ENCODE measurements at regions of chr15 and their contacts with region 1.

Region 1: GRCh38 chr15:74635228-74635627 is 19.6 kb downstream of the CLK3 start:
- DNase-seq: peak; percentile 61
- H3K4me3 Mint-ChIP-seq: no peak overlapping the region
- H3K27ac Mint-ChIP-seq: no peak overlapping the region
- H3K4me1 Mint-ChIP-seq: no peaks in the 10 kb centered on the region
- H3K27me3 Mint-ChIP-seq: no peaks in the 10 kb centered on the region

Region 2: DNA sequence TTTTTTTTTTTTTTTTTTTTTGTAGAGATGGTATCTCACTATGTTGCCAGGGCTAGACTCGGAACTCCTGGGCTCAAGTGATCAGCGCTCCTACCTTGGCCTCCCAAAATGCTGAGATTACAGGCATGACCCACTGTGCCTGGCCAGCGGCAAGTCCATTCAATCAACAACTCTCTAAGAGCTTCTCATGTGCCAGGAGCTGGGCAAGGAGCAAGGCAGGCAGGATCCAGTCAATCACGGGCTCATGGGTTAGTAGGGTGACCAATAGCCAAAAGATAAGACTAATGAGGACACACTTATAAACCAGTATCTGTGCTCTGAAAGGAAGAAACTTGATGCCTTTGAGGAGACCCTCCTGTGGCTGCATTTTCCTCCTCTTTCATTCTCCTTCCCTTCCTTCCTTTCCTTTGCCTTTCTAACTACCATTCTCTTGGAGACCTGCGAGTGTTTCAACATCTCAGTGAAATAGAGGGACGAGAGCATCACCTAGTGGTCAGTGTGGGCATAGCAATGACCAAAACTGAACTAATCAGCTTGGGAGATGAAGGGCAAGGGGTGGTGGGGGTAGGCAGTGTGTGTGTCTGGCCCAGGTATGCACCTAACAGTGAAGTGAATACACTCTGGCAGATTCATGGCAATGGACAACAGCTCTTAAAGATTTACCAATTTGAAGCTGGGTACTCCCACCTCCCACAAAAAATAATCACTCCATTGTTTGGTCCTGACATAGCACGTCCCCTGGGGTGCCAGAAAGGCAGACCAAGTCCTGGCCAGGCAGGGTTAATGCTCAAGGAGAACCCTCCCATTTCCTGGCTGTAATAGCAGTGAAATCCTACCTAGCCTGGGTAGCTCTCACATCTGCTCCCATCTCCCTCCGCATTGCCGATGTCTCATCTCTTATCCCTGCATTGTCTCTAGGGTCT is 315.1 kb after region 1 on chr15:
- intact Hi-C with region 1: loop called (anchors 5 kb)
- DNase-seq: peak; percentile 71
- H3K4me3 Mint-ChIP-seq: no peak overlapping the region
- H3K27ac Mint-ChIP-seq: no peak overlapping the region
- H3K4me1 Mint-ChIP-seq: peaks cover 10% of the 10 kb centered on the region
- H3K27me3 Mint-ChIP-seq: peaks cover 2% of the 10 kb centered on the region